AG04450 (cell line): ENCODE measurements at regions of chr6 and their contacts with region 1.

Region 1: GRCh38 chr6:30914076-30914853 is at the start of gene VARS2:
- DNase-seq: peak; percentile 71
- H3K4me3 ChIP-seq: peak within 1 kb of the TSS; percentile 63
- H3K27ac ChIP-seq: peak within 1 kb of the TSS; percentile 68
- H3K27me3 ChIP-seq: no peaks in the 10 kb centered on the region
- CTCF ChIP-seq: peak; percentile 40
- polyA plus RNA-seq, gene VARS2: 10.3 and 12.2 TPM in 2 replicates

Region 2: DNA sequence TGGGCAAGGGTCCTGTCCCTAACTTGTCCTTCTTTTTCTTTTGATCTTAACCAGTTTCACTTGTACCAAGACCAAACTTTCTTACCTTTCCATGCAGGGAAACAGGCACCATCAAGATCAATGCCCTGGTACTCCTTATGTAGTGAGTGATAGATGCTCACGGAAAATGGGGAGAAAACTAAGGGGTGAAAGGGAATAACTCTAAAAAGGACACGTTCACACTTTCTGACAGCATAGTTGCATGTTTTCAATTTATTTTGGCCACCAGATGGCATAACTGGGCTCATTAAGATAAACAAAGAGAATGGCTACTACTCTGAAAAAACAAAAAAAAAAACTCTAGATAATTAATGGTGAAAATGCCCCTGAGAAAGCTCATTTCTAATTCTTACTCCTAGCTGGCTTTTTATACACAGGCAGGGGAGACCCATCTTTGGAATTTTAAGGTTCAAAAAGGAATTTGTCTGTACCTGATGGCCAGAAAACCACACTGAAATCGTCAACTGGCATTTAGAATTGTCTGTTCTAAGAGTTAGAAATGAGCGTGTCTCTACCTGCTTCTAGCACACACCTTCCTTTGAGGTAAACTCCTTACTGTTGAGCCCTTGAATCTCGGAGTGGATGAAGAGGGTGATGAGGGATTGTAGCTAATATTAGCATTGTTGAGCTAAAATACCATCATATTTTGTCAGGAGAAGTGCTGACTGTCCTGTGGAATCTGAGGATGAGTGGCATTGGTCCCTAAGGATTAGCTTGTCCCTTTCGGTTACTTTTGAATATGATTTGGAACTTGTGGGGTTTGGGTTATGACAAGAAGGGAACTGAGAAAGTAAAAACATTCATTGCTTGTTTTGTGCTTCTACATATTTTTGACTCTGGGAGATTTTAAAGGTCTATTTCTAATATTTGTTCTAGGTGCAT is 92.1 kb before region 1 on chr6:
- CTCF ChIA-PET with region 1: interaction called, 101 read pairs
- POLR2A ChIA-PET with region 1: no interaction called
- DNase-seq: no peak
- H3K4me3 ChIP-seq: no peak overlapping the region
- H3K27ac ChIP-seq: peak overlapping the region; percentile 21
- H3K27me3 ChIP-seq: no peaks in the 10 kb centered on the region
- CTCF ChIP-seq: peak; percentile 58

Region 3: GRCh38 chr6:30928677-30929076 is 14.4 kb after region 1 on chr6:
- CTCF ChIA-PET with region 1: interaction called, 14 read pairs
- POLR2A ChIA-PET with region 1: no interaction called
- DNase-seq: no peak
- H3K4me3 ChIP-seq: no peak overlapping the region
- H3K27ac ChIP-seq: no peak overlapping the region
- H3K27me3 ChIP-seq: peaks cover 7% of the 10 kb centered on the region
- CTCF ChIP-seq: no peak

Region 4: DNA sequence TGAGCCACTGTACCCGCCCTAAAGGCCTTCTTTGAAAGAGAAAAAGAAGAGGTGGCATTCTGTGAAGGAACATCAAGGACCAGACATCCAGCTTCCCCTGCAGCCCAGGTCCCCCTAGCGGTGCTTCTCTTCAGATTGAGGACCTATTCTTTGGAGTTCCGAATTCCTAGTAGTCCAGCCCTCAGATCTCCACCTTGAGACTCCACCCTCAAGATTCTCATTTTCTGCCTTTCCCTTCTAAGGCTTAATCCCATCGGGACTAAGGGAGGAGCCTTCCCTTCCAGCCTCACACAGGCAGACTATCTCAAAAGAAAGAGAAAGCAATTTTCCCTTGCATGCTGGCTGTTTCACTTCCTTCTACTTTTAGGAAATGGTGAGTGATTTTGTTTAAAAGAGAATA is 128.5 kb after region 1 on chr6:
- CTCF ChIA-PET with region 1: interaction called, 11 read pairs
- POLR2A ChIA-PET with region 1: no interaction called
- DNase-seq: no peak
- H3K4me3 ChIP-seq: no peak overlapping the region
- H3K27ac ChIP-seq: no peak overlapping the region
- H3K27me3 ChIP-seq: peaks cover 10% of the 10 kb centered on the region
- CTCF ChIP-seq: peak; percentile 78

Region 5: GRCh38 chr6:31079656-31080261 is 165.5 kb after region 1 on chr6:
- CTCF ChIA-PET with region 1: interaction called, 261 read pairs
- POLR2A ChIA-PET with region 1: interaction called, 4 read pairs
- DNase-seq: peak; percentile 41
- H3K4me3 ChIP-seq: no peak overlapping the region
- H3K27ac ChIP-seq: no peak overlapping the region
- H3K27me3 ChIP-seq: no peaks in the 10 kb centered on the region
- CTCF ChIP-seq: peak; percentile 94

Region 6: GRCh38 chr6:31139599-31139998 is 225.3 kb after region 1 on chr6:
- CTCF ChIA-PET with region 1: no interaction called
- POLR2A ChIA-PET with region 1: no interaction called
- DNase-seq: no peak
- H3K4me3 ChIP-seq: no peak overlapping the region
- H3K27ac ChIP-seq: no peak overlapping the region
- H3K27me3 ChIP-seq: no peaks in the 10 kb centered on the region
- CTCF ChIP-seq: no peak

Region 7: GRCh38 chr6:31403283-31403989 is 489.2 kb after region 1 on chr6 and contains the start of gene MICA:
- CTCF ChIA-PET with region 1: interaction called, 10 read pairs
- POLR2A ChIA-PET with region 1: no interaction called
- DNase-seq: peak; percentile 34
- H3K4me3 ChIP-seq: peak within 1 kb of the TSS; percentile 90
- H3K27ac ChIP-seq: peak within 1 kb of the TSS; percentile 21
- H3K27me3 ChIP-seq: no peaks in the 10 kb centered on the region
- CTCF ChIP-seq: no peak
- polyA plus RNA-seq, gene MICA: 39.9 and 48.5 TPM in 2 replicates